Heart left ventricle (tissue), 16 donors: ENCODE measurements at regions of chr1 and their contacts with region 1.

Region 1: DNA sequence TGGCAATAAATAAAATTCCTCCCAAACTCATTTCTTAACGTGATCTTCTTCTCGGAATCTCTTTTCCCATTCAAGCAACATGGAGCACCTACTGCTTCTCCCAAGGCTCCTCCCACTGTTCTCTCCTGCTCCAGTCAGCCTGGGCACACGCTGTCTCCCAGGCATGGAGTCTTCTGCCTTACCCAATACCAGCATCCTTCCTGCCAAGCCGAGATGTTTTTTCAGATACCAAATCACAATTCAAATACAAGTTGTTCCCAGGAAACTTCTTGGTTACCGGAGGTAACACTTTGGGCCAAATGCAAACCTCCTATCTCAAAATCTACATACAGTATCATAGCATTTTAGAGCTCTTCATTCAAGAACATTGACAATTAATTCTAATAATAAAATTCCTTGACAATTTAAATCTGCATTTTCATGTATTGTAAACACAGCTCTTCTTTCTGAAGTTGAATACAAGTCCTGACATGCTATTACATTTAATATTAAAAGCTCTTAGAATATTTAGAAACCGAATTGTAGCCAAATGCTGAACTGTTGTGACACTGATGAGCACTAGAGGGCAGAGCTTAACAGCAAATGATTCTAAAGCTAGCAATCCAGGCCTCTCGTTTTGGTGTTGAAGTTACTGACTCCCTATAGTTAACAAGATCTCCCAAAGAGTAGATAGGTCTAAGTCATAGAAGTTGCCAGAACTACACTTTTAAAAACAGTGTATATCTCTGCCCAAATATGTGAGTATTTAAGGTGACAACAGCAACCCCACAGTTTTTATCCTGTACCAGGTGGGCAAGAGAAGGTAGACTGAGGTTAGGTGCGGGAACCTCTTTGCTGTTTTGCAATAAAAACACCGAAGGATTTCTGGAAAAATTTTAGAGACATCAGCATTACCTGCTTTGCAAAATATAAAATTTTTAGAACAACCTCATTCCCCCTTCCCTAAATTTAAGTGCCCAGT is 52.3 kb downstream of the BCAR3 start:
- DNase-seq: peak in 2 of 5 donors; percentile 49 to 56
- ATAC-seq: peak; percentile 47 to 68 (median 60)
- H3K4me3 ChIP-seq: no peak overlapping the region
- H3K27ac ChIP-seq: peak overlapping the region in 1 of 12 donors; percentile 34
- H3K4me1 ChIP-seq: peaks cover 0 to 34% (median 24%) of the 10 kb centered on the region in 12 donors
- H3K27me3 ChIP-seq: no peaks in the 10 kb centered on the region
- CTCF ChIP-seq: peak; percentile 75 to 94 (median 88)
- POLR2A ChIP-seq: no peak

Region 2: GRCh38 chr1:93345633-93346420 is 283.6 kb before region 1 on chr1 and contains the start of gene DR1:
- intact Hi-C with region 1: loop called in 1 of 10 experiments (anchors 10 kb)
- DNase-seq: peak; percentile 96 to 97 (median 96)
- ATAC-seq: peak; percentile 94 to 98 (median 98)
- H3K4me3 ChIP-seq: peak within 1 kb of the TSS; percentile 65 to 98 (median 92)
- H3K27ac ChIP-seq: peak within 1 kb of the TSS; percentile 82 to 98 (median 94)
- H3K4me1 ChIP-seq: peaks cover 0 to 38% (median 28%) of the 10 kb centered on the region in 12 donors
- H3K27me3 ChIP-seq: no peaks in the 10 kb centered on the region
- CTCF ChIP-seq: no peak
- POLR2A ChIP-seq: peak in 1 of 2 donors; percentile 71
- total RNA-seq, gene DR1: 21.6 to 45.1 (median 37.8) TPM

Region 3: GRCh38 chr1:93680757-93681550 is 51.6 kb after region 1 on chr1:
- intact Hi-C with region 1: loop called in 9 of 10 experiments (anchors 1 to 2 kb)
- DNase-seq: peak; percentile 80 to 91 (median 85)
- ATAC-seq: peak; percentile 89 to 91 (median 90)
- H3K4me3 ChIP-seq: peak overlapping the region; percentile 74 to 96 (median 90)
- H3K27ac ChIP-seq: peak overlapping the region; percentile 84 to 94 (median 92)
- H3K4me1 ChIP-seq: peaks cover 0 to 53% (median 32%) of the 10 kb centered on the region in 12 donors
- H3K27me3 ChIP-seq: no peaks in the 10 kb centered on the region
- CTCF ChIP-seq: peak; percentile 40 to 73 (median 58)
- POLR2A ChIP-seq: peak in 1 of 2 donors; percentile 41

Region 4: DNA sequence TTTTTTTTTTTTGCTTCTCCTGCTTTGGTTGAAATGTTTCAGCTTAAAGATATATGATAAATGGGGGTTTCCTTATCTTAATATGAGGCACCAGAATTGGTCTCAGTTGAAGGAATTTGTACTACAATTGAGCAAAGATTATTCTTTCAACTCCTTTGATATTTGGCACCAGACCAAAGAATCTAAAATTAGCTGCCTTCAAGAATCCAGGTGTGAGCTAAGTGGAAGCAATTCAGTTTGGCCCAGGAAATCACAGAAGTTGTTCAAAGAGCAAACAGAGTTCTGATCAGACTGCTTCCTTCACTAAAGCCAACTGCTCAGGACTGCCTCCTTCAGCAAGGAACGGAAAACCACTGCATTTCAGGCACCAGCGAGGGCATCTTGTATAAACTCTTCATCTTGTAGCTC is 120.5 kb after region 1 on chr1:
- intact Hi-C with region 1: loop called in 1 of 10 experiments (anchors 5 kb)
- DNase-seq: no peak
- ATAC-seq: no peak
- H3K4me3 ChIP-seq: no peak overlapping the region
- H3K27ac ChIP-seq: peak overlapping the region in 1 of 12 donors; percentile 27
- H3K4me1 ChIP-seq: peaks cover 0 to 41% (median 21%) of the 10 kb centered on the region in 12 donors
- H3K27me3 ChIP-seq: peaks cover 0 to 10% (median 0%) of the 10 kb centered on the region in 9 donors
- CTCF ChIP-seq: peak in 2 of 12 donors; percentile 14 to 28
- POLR2A ChIP-seq: no peak

Region 5: GRCh38 chr1:93846211-93846991 is 217.0 kb after region 1 on chr1:
- intact Hi-C with region 1: loop called in 9 of 10 experiments (anchors 2 to 10 kb)
- DNase-seq: peak; percentile 89 to 93 (median 90)
- ATAC-seq: peak; percentile 49 to 78 (median 74)
- H3K4me3 ChIP-seq: peak overlapping the region; percentile 79 to 93 (median 86)
- H3K27ac ChIP-seq: peak overlapping the region; percentile 87 to 99 (median 98)
- H3K4me1 ChIP-seq: peaks cover 0 to 34% (median 22%) of the 10 kb centered on the region in 12 donors
- H3K27me3 ChIP-seq: no peaks in the 10 kb centered on the region
- CTCF ChIP-seq: peak in 9 of 12 donors; percentile 17 to 59 (median 39)
- POLR2A ChIP-seq: peak in 1 of 2 donors; percentile 47